ENCODE measurements at regions of chr22 and their contacts with region 1.

Region 1: GRCh38 chr22:41543854-41544670 is at the start of gene POLR3H:
- DNase-seq: peak; percentile 99 to 100 (median 99)
- ATAC-seq: peak; percentile 94 to 98 (median 95)
- H3K4me3 ChIP-seq: peak within 1 kb of the TSS; percentile 72 to 88 (median 88)
- H3K27ac ChIP-seq: peak within 1 kb of the TSS; percentile 67 to 80 (median 71)
- H3K4me1 ChIP-seq: peaks cover 0 to 27% (median 12%) of the 10 kb centered on the region in 4 donors
- H3K27me3 ChIP-seq: no peaks in the 10 kb centered on the region
- CTCF ChIP-seq: peak; percentile 49 to 90 (median 77)
- POLR2A ChIP-seq: peak; percentile 59
- total RNA-seq, gene POLR3H: 9.5 to 23.0 (median 18.0) TPM

Region 2: DNA sequence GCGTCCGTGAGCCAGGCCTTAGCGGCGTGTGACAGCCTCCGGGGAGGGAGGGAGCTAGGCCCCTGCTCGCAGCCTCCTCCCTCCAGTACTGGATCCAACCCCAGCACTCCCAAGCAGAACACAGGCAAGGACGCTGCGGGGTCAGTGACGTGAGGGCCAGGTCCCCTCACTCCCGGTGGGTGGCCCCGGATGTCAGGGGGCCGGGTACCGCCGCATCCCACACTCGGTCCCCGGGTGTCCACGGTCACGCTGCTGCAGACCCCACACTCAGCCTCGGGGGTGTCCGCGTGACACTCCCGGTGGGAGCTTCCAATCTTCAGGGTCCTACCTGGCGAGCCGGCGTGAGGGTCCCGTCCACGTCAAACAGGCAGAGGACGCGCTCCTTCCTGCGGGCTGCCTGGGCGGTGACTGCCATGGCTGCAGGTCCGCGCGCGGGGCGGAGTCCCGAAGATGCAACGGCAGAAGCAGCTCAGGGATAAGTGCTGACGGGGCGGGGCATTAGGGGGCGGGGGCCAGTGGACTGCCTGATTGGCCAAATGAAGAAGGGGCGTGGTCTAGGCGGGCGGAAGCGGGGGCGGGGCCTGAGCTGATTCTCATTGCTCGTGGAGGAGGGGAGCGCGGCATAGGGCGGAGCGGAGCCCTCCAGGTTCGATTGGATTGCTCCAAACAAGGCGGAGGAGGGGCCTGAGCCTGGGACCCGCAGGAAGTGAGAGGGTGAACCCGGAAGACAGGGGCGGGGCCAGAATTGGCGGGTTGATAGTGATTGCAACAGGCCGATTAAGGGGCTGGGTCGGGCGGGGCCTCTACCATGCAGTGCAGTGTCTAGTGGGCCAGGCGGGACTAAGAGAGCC is 45.6 kb after region 1 on chr22 and contains the start of gene PMM1:
- intact Hi-C with region 1: loop called in 1 of 2 experiments (anchors 10 kb)
- DNase-seq: peak; percentile 100
- ATAC-seq: peak; percentile 89 to 96 (median 92)
- H3K4me3 ChIP-seq: peak within 1 kb of the TSS; percentile 96 to 99 (median 98)
- H3K27ac ChIP-seq: peak within 1 kb of the TSS; percentile 51 to 87 (median 86)
- H3K4me1 ChIP-seq: peaks cover 0 to 16% (median 7%) of the 10 kb centered on the region in 4 donors
- H3K27me3 ChIP-seq: no peaks in the 10 kb centered on the region
- CTCF ChIP-seq: no peak
- POLR2A ChIP-seq: peak; percentile 92
- total RNA-seq, gene PMM1: 21.6 to 45.1 (median 36.2) TPM

Region 3: DNA sequence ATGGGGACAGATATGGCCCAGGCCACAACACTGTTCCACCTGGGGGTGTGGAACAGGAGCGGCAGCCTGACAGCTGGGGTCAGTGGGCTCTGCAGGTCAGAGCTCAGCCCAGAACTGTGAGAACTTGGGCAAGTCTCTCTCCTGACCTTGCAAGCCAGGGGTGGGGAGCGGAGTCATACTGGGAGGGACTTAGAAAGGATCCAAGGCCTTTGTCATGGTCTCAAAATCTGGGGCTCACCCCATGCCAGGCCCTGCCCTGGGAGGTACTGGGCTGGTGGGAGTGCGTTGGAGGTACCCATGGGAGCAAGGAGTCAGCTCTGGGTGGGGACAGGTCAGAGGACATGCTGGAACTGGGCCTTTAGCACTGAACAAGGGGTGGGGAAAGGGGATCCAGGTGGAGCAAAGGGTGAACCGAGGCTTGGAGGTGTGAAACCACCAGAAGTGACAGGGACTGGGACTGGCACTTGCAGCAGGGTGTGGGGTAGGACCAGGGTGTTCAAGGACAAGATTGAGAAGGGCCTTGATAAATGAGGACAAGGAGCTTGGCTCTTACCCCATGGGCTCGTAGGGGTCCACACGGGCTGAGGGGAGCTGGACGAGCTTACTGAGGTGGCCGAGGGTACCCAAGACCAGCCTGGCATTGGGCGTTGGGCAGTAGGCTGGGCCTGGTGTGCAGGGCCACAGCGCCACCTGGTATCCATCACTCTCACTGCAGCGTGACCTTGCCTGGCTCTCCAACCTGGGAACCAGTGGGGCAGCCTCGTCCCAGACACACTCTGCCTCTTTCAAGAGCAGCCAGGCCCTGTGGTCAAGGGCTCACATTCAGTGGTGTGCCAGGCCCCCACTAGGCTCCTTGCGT is 52.9 kb after region 1 on chr22:
- intact Hi-C with region 1: loop called (anchors 5 to 10 kb)
- DNase-seq: peak; percentile 62 to 65 (median 65)
- ATAC-seq: peak; percentile 91 to 96 (median 93)
- H3K4me3 ChIP-seq: no peak overlapping the region
- H3K27ac ChIP-seq: no peak overlapping the region
- H3K4me1 ChIP-seq: no peaks in the 10 kb centered on the region
- H3K27me3 ChIP-seq: no peaks in the 10 kb centered on the region
- CTCF ChIP-seq: peak; percentile 64 to 80 (median 74)
- POLR2A ChIP-seq: no peak